Mucosa of descending colon (tissue), 3 donors: ENCODE measurements at regions of chr18 and their contacts with region 1.

Region 1: DNA sequence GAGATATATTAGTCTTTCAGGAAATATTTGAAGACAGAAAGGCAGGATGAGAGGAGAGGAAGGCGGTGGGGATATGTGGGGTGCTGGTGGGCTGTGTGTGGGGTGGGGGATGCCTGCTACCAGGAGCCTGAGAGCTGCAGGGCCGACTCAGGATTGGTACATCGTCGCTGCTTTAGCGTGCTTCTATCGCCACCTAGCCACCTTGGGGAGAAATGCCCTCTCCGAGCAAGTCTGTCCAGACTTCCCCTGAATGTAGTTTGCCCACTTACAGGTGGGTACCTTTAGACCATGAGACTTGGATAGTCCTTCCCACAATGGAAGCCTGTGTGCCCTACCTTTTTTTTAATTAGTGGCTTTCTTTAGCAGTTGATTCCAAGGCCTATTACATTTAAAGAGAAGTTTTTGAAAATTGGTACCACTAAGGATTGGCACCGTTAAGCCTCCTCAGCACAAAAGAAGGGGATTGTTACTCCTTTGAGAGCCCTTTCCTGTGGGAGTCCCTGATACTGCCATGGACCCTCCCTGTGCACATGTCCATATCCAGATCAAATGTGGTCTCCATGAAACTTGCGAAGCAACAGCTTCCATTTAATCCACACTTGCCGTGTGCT is 114.1 kb upstream of the NDUFV2 start:
- DNase-seq: peak; percentile 48 to 60 (median 58)
- ATAC-seq: peak; percentile 76
- H3K4me3 ChIP-seq: no peak overlapping the region
- H3K4me1 ChIP-seq: no peaks in the 10 kb centered on the region
- CTCF ChIP-seq: peak; percentile 64

Region 2: GRCh38 chr18:8654503-8655451 is 333.6 kb before region 1 on chr18:
- intact Hi-C with region 1: loop called (anchors 10 kb)
- DNase-seq: no peak
- ATAC-seq: no peak
- H3K4me3 ChIP-seq: no peak overlapping the region
- H3K4me1 ChIP-seq: no peaks in the 10 kb centered on the region
- CTCF ChIP-seq: peak; percentile 56

Region 3: DNA sequence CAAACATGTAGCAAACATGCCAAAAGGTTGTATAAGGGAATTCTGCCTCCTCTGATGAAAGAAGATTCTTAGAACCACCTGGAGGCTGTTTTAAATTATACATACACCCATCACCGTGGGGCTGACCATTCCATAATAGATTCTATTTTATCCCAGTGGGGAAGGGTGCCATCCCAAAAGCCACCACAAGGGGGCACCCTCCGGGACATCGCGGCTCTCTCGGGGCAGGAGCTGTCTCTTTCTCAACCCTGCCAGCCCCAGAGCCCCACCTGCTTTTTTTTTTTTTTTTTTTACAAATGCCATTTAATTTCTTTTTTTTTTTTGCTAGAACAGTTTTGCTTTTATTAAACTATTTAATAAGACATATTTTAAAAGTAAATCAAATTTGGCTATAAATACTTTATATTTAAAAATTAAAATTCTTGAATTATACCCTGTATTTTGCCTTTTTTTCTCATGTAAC is 291.6 kb before region 1 on chr18:
- intact Hi-C with region 1: loop called in 1 of 2 experiments (anchors 10 kb)
- DNase-seq: peak; percentile 68 to 90 (median 85)
- ATAC-seq: peak; percentile 98
- H3K4me3 ChIP-seq: no peak overlapping the region
- H3K4me1 ChIP-seq: no peaks in the 10 kb centered on the region
- CTCF ChIP-seq: peak; percentile 73